ENCODE measurements at regions of chr3 and their contacts with region 1.

Region 1: GRCh38 chr3:130892759-130893375 is 1.0 kb upstream of the ATP2C1 start:
- DNase-seq: peak in 3 of 4 donors; percentile 64 to 87 (median 79)
- ATAC-seq: peak; percentile 78
- H3K4me3 ChIP-seq: peak overlapping the region; percentile 75 to 79
- H3K27ac ChIP-seq: peak overlapping the region; percentile 98 to 99
- H3K4me1 ChIP-seq: peaks cover 0 to 36% of the 10 kb centered on the region in 2 donors
- H3K27me3 ChIP-seq: no peaks in the 10 kb centered on the region
- CTCF ChIP-seq: peak; percentile 73 to 81

Region 2: GRCh38 chr3:130759699-130760338 is 133.0 kb before region 1 on chr3:
- intact Hi-C with region 1: loop called in 1 of 2 experiments (anchors 5 kb)
- DNase-seq: peak in 3 of 4 donors; percentile 45 to 72 (median 47)
- ATAC-seq: peak; percentile 94
- H3K4me3 ChIP-seq: no peak overlapping the region
- H3K27ac ChIP-seq: no peak overlapping the region
- H3K4me1 ChIP-seq: no peaks in the 10 kb centered on the region
- H3K27me3 ChIP-seq: no peaks in the 10 kb centered on the region
- CTCF ChIP-seq: peak; percentile 62 to 67

Region 3: DNA sequence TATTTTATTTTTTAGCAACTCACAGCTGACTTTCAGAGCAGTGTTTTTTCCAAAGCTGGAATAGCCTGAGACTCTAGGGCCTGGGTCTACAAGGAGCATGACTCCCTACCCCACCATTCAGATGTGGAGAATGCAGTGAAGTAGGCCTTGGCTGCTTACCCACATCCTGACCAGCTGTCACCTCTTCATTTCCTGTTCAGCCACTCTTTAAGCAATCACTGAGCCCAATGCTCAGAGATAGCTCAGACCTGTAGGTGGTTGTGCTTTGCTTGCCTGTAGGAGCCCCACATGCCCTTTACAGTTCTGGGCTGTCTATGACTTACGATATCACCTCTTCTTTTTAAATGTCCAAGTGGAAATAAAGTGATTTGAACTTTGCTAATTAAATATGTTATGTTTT is 281.9 kb after region 1 on chr3:
- intact Hi-C with region 1: no loop called
- DNase-seq: no peak
- ATAC-seq: peak; percentile 41
- H3K4me3 ChIP-seq: no peak overlapping the region
- H3K27ac ChIP-seq: no peak overlapping the region
- H3K4me1 ChIP-seq: no peaks in the 10 kb centered on the region
- H3K27me3 ChIP-seq: no peaks in the 10 kb centered on the region
- CTCF ChIP-seq: no peak